ENCODE measurements at regions of chr9 and their contacts with region 1.

Region 1: DNA sequence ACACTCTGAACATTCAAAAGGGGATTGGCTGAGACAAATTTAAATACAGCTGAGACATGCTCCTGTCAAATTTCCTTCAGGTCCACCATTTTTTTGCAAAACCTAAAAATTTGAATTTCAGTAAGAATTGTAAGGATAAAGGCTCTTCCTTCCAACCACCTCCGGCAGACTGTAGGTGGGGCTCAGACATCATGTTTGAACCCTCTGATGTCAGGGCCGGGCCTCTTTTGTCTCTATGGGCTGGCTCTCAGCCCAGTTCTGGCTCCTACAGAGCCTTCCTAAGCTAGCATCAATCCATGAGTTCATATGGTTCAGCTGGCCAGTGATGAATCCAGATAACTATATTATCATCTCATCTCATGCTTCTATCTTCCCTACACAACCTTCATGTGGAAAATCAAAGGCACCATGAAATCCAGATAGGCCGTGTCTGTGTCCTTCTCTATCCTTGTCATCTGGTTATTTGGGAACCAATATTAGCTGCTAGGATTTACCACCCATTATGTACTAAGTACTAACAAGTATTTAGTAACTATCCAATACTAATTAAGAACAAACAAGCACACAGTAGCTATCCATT is 44.2 kb downstream of the NIPSNAP3B start:
- DNase-seq: peak in 6 of 10 donors; percentile 28 to 65 (median 55)
- H3K4me3 ChIP-seq: no peak overlapping the region
- H3K27ac ChIP-seq: peak overlapping the region in 3 of 59 donors; percentile 3 to 34 (median 30)
- H3K27me3 ChIP-seq: no peaks in the 10 kb centered on the region
- CTCF ChIP-seq: peak in 50 of 56 donors; percentile 11 to 63 (median 40)

Region 2: GRCh38 chr9:104950838-104951237 is 142.7 kb after region 1 on chr9:
- intact Hi-C with region 1: no loop called
- DNase-seq: no peak
- H3K4me3 ChIP-seq: no peak overlapping the region
- H3K27ac ChIP-seq: no peak overlapping the region
- H3K27me3 ChIP-seq: no peaks in the 10 kb centered on the region
- CTCF ChIP-seq: no peak

Region 3: DNA sequence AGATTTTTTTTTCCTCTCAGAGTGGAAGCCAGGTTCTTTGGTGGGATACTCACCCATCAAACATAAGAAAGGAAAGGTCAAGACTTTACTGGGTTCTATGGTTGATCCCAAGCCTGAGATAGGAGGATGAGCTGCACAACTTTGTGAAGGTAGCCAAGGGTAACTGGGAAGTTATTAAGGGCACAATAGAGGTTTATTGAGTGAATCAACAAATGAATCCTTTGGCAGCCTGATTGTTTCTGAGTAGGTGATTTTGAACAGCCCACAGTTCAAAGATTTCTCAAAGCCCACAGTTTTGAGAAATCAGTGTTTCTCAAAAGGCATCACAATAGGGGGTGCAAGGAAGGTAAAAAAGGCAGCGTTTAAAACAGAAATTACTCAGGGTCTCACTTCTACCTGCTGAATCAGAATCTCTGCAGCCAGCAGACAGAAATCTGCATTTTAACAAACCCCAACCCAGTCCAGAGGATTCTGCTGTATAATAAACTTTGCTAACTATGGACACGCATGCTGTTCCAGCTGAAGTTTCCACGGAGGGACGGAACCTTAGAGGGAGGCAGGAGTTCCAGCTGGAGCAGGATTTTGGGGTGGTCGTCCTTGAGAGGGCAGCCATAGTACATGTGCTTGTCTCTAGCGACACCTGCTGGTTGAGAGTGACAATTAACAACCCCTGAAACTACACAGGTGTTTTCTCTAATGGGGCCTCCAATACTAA is 607.0 kb after region 1 on chr9:
- intact Hi-C with region 1: loop called in 1 of 2 experiments (anchors 10 kb)
- DNase-seq: peak in 6 of 10 donors; percentile 35 to 67 (median 58)
- H3K4me3 ChIP-seq: peak overlapping the region in 4 of 59 donors; percentile 11 to 33 (median 24)
- H3K27ac ChIP-seq: peak overlapping the region in 44 of 59 donors; percentile 1 to 84 (median 57)
- H3K27me3 ChIP-seq: no peaks in the 10 kb centered on the region
- CTCF ChIP-seq: peak; percentile 77 to 97 (median 88)

Measured in dorsolateral prefrontal cortex (tissue), 120 donors.